Endothelial cell of umbilical vein (primary cell): ENCODE measurements at regions of chr5 and their contacts with region 1.

Region 1: GRCh38 chr5:170986598-170986997 is 124.8 kb downstream of the RANBP17 start:
- DNase-seq: peak; percentile 78
- H3K4me3 ChIP-seq: no peak overlapping the region
- H3K27ac ChIP-seq: no peak overlapping the region
- H3K4me1 ChIP-seq: peaks cover 7% of the 10 kb centered on the region
- H3K27me3 ChIP-seq: no peaks in the 10 kb centered on the region
- CTCF ChIP-seq: peak in 1 of 2 donors; percentile 10
- POLR2A ChIP-seq: no peak

Region 2: GRCh38 chr5:170937914-170938313 is 48.7 kb before region 1 on chr5:
- CTCF ChIA-PET with region 1: no interaction called
- POLR2A ChIA-PET with region 1: no interaction called
- dilution Hi-C with region 1: no loop called
- intact Hi-C with region 1: no loop called
- DNase-seq: no peak
- H3K4me3 ChIP-seq: no peak overlapping the region
- H3K27ac ChIP-seq: no peak overlapping the region
- H3K4me1 ChIP-seq: no peaks in the 10 kb centered on the region
- H3K27me3 ChIP-seq: no peaks in the 10 kb centered on the region
- CTCF ChIP-seq: no peak
- POLR2A ChIP-seq: no peak

Region 3: DNA sequence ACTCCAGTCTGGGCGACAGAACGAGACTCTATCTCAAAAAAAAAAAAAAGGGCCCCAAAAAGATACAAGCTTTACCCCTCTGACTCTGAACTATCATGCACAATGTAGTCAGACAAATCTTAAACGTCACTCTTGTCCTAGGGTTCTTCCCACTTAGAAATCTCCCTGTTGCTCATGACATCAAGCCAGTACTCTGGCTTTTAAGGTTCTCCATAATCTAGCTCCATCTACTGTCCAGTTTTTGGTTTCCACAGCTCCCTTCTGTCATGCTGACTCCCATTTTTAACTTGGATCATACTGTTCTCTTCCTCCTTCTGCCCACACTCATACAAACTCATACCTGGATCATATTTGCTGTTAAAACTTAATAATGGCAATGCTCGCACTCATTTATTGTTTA is 165.8 kb after region 1 on chr5:
- CTCF ChIA-PET with region 1: interaction called, 4 read pairs
- POLR2A ChIA-PET with region 1: no interaction called
- dilution Hi-C with region 1: no loop called
- intact Hi-C with region 1: loop called (anchors 1 kb)
- DNase-seq: peak; percentile 25
- H3K4me3 ChIP-seq: no peak overlapping the region
- H3K27ac ChIP-seq: no peak overlapping the region
- H3K4me1 ChIP-seq: peaks cover 19% of the 10 kb centered on the region
- H3K27me3 ChIP-seq: no peaks in the 10 kb centered on the region
- CTCF ChIP-seq: no peak
- POLR2A ChIP-seq: no peak

Region 4: GRCh38 chr5:171175746-171176145 is 189.1 kb after region 1 on chr5:
- CTCF ChIA-PET with region 1: interaction called, 3 read pairs
- POLR2A ChIA-PET with region 1: no interaction called
- dilution Hi-C with region 1: no loop called
- intact Hi-C with region 1: loop called (anchors 1 kb)
- DNase-seq: no peak
- H3K4me3 ChIP-seq: no peak overlapping the region
- H3K27ac ChIP-seq: no peak overlapping the region
- H3K4me1 ChIP-seq: no peaks in the 10 kb centered on the region
- H3K27me3 ChIP-seq: no peaks in the 10 kb centered on the region
- CTCF ChIP-seq: no peak
- POLR2A ChIP-seq: no peak

Region 5: GRCh38 chr5:171201310-171201709 is 214.7 kb after region 1 on chr5:
- CTCF ChIA-PET with region 1: no interaction called
- POLR2A ChIA-PET with region 1: no interaction called
- dilution Hi-C with region 1: no loop called
- intact Hi-C with region 1: loop called (anchors 2 kb)
- DNase-seq: no peak
- H3K4me3 ChIP-seq: no peak overlapping the region
- H3K27ac ChIP-seq: no peak overlapping the region
- H3K4me1 ChIP-seq: no peaks in the 10 kb centered on the region
- H3K27me3 ChIP-seq: no peaks in the 10 kb centered on the region
- CTCF ChIP-seq: no peak
- POLR2A ChIP-seq: no peak

Region 6: GRCh38 chr5:171272996-171273970 is 286.7 kb after region 1 on chr5:
- CTCF ChIA-PET with region 1: no interaction called
- POLR2A ChIA-PET with region 1: no interaction called
- dilution Hi-C with region 1: no loop called
- intact Hi-C with region 1: loop called (anchors 5 kb)
- DNase-seq: peak; percentile 12
- H3K4me3 ChIP-seq: no peak overlapping the region
- H3K27ac ChIP-seq: no peak overlapping the region
- H3K4me1 ChIP-seq: no peaks in the 10 kb centered on the region
- H3K27me3 ChIP-seq: no peaks in the 10 kb centered on the region
- CTCF ChIP-seq: peak in 1 of 2 donors; percentile 26
- POLR2A ChIP-seq: no peak

Region 7: DNA sequence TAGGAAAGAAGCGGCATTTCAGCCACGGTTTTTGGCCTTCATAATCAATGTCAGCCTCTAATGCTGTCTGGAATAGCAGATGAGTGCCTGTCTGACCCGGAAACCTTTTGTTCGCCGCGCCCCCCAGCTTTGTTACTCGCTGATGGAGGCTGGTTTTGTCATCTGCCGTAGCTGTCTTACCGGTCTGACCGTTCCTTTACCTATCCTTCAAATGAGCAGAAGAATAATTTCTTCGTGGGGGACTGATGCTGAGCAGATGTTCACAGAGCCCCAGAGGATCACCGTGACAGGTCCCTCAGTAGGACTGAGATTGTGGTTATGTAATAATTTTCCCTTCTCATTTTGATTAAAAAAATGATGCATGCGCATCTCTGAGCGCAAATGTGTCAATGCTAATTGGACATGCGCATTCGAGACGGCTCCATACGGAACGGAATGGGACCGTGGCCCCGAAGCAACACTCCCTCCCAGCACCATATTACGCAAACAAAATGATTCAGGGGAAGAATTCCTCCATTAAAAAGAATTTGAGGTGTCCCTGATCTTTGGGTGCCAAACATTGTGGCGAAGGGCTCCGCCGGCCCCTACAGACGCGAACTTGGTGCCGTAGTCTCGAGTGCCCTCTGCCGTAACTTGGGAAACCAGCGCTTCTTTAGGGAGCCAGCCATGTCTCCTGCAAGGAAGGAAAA is 350.1 kb after region 1 on chr5:
- CTCF ChIA-PET with region 1: interaction called, 29 read pairs
- POLR2A ChIA-PET with region 1: no interaction called
- dilution Hi-C with region 1: no loop called
- intact Hi-C with region 1: loop called (anchors 1 kb)
- DNase-seq: peak; percentile 73
- H3K4me3 ChIP-seq: peak overlapping the region; percentile 35 to 66 (median 60)
- H3K27ac ChIP-seq: no peak overlapping the region
- H3K4me1 ChIP-seq: peaks cover 7% of the 10 kb centered on the region
- H3K27me3 ChIP-seq: peaks cover 8 to 11% of the 10 kb centered on the region in 2 experiments
- CTCF ChIP-seq: peak; percentile 58 to 83
- POLR2A ChIP-seq: no peak

Region 8: GRCh38 chr5:171342362-171343111 is 355.9 kb after region 1 on chr5:
- CTCF ChIA-PET with region 1: interaction called, 29 read pairs
- POLR2A ChIA-PET with region 1: no interaction called
- dilution Hi-C with region 1: no loop called
- intact Hi-C with region 1: loop called (anchors 1 kb)
- DNase-seq: peak; percentile 64
- H3K4me3 ChIP-seq: no peak overlapping the region
- H3K27ac ChIP-seq: no peak overlapping the region
- H3K4me1 ChIP-seq: no peaks in the 10 kb centered on the region
- H3K27me3 ChIP-seq: no peaks in the 10 kb centered on the region
- CTCF ChIP-seq: peak; percentile 57 to 61
- POLR2A ChIP-seq: no peak